HEK293 (cell line): ENCODE measurements at regions of chr17 and their contacts with region 1.

Region 1: GRCh38 chr17:1516388-1517161 is at the start of gene INPP5K:
- H3K4me3 ChIP-seq: peak within 1 kb of the TSS; percentile 96
- H3K27ac ChIP-seq: peak within 1 kb of the TSS; percentile 62
- H3K4me1 ChIP-seq: no peaks in the 10 kb centered on the region
- CTCF ChIP-seq: peak; percentile 57

Region 2: GRCh38 chr17:343211-343610 is 1173.4 kb before region 1 on chr17:
- CTCF ChIA-PET with region 1: no interaction called
- POLR2A ChIA-PET with region 1: interaction called, 12 read pairs
- H3K4me3 ChIP-seq: no peak overlapping the region
- H3K27ac ChIP-seq: no peak overlapping the region
- H3K4me1 ChIP-seq: no peaks in the 10 kb centered on the region
- CTCF ChIP-seq: no peak

Region 3: DNA sequence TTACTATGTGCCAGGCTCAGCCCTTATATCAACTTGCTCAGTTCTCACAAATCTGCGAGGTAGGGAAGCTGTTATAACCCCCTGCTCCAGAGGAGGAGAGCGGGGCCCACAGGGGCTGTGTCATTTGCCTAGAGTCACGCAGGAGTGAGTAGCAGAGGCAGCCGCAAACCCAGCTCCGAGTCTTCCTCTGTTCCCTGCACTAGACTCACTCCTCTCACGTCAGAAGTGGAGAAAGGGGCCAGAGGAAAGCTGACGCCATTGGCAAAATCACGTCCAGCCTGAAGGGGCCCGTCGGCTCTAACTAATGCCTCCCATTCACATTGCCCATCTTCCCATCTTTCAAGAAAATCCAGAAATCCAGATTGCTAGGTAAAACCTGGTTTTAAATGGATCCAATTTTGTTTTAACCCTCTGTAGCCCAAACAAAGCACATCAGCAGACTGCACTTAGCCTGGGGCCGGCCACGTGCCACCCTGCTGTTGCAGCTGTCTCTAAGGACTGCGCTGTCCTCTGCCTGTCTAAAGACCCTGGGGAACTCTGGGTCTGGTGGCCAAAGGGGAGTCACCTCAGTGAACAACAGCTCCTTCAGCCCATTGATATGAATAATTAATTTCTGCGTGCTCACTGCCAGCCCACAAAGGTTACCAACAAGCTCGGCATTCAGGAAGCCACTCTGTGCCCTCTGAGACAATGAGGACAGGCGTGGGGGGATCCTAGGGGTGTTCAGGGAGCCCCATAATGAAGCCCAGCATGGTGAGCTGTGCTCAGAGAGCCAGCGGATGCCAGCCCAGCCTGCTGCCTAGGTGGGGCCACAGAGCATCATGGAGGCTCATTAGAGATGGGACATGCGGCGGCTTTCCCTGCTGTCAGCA is 300.1 kb before region 1 on chr17:
- CTCF ChIA-PET with region 1: no interaction called
- POLR2A ChIA-PET with region 1: no interaction called
- H3K4me3 ChIP-seq: no peak overlapping the region
- H3K27ac ChIP-seq: no peak overlapping the region
- H3K4me1 ChIP-seq: 0 out of 2 replicates have a peak, but pooled peaks cover 3% of the 10 kb centered on the region
- CTCF ChIP-seq: no peak

Region 4: DNA sequence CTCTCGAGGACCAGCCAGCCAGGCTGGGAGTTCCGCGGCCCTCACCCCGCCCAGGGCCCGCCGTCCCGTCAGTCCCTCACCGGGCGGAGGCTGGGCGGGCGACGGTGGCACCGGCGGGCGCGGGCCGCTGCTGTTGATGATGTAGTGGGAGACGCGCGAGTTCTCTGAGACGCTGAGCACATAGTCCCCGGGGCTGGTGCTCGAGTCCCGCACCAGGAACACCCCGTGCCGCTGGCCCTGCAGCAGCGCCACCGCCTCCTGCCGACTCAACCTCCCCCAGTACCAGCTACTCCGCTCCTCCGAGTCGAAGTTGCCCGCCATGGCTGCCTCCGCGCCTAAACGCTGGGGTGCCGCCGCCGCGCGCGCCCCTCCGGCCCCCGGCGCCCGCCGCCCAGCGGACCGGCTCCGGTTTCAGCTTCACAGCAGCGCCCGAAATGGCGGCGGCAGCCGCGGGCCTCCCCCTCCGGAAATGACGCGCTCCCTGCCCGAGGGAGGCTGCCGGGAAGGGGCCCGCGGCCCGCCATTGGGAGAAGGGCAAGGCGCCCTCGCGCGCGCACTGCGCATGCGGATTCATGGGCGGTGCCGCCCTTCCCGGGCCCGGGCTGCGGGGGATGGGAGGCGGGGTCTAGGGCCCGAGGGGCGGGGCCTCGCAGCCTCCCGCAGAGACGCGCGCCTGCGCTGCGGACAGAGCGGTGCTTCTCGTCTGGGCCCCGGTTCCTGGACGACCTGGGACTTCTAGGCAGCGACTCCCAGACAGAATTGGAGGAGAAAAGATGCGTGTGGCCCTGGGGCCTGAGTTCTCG is 60.6 kb before region 1 on chr17 and contains the start of gene CRK:
- CTCF ChIA-PET with region 1: interaction called, 3 read pairs
- POLR2A ChIA-PET with region 1: interaction called, 14 read pairs
- H3K4me3 ChIP-seq: peak within 1 kb of the TSS; percentile 98
- H3K27ac ChIP-seq: peak within 1 kb of the TSS; percentile 92
- H3K4me1 ChIP-seq: peaks cover 7% of the 10 kb centered on the region
- CTCF ChIP-seq: no peak

Region 5: DNA sequence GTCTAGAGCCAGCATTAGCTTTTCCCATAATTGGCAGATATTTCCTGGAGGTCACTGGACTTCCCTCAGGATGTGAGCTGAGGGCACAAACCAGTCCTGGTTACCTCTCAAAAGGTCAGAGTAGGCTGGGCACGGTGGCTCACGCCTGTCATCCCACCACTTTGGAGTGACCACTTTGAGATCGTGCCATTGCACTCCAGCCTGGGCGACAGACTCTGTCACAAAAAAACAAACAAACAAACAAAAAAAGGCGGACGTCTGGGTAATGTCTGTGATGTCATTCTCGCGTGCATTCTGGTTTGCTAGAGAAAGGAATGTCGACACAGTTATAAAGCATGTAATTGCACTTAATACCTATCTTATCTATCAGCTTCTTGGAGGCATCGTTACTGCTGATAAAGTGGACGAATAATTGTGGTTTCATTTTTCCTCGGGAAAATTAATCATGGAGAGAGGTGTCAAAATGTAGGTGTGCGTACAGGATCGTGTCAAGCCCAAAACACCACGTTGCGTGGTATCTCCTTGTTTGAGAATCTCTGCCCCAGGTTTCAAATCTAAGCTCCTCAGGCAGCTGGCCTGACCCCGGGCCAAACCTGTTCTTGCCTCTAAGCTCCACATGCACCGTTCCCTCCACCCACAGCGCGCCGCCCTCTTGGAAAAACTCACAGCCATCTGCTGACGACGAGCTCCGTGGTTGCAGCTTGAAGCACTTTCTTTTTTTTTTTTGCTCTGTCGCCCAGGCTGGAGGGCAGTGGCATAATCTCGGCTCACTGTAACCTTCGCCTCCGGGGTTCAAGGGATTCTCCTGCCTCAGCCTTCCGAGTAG is 54.1 kb before region 1 on chr17:
- CTCF ChIA-PET with region 1: interaction called, 3 read pairs
- POLR2A ChIA-PET with region 1: interaction called, 10 read pairs
- H3K4me3 ChIP-seq: no peak overlapping the region; the same call in 1 of the 2 replicates
- H3K27ac ChIP-seq: peak overlapping the region; percentile 62
- H3K4me1 ChIP-seq: peaks cover 4% of the 10 kb centered on the region
- CTCF ChIP-seq: peak; percentile 41

Region 6: GRCh38 chr17:1488030-1488863 is 28.3 kb before region 1 on chr17:
- CTCF ChIA-PET with region 1: interaction called, 6 read pairs
- POLR2A ChIA-PET with region 1: interaction called, 13 read pairs
- H3K4me3 ChIP-seq: peak overlapping the region; percentile 45
- H3K27ac ChIP-seq: peak overlapping the region; percentile 70; the same call in 1 of the 2 replicates
- H3K4me1 ChIP-seq: peaks cover 6% of the 10 kb centered on the region; the same call in 1 of the 2 replicates
- CTCF ChIP-seq: peak; percentile 37; the same call in 1 of the 2 replicates

Region 7: DNA sequence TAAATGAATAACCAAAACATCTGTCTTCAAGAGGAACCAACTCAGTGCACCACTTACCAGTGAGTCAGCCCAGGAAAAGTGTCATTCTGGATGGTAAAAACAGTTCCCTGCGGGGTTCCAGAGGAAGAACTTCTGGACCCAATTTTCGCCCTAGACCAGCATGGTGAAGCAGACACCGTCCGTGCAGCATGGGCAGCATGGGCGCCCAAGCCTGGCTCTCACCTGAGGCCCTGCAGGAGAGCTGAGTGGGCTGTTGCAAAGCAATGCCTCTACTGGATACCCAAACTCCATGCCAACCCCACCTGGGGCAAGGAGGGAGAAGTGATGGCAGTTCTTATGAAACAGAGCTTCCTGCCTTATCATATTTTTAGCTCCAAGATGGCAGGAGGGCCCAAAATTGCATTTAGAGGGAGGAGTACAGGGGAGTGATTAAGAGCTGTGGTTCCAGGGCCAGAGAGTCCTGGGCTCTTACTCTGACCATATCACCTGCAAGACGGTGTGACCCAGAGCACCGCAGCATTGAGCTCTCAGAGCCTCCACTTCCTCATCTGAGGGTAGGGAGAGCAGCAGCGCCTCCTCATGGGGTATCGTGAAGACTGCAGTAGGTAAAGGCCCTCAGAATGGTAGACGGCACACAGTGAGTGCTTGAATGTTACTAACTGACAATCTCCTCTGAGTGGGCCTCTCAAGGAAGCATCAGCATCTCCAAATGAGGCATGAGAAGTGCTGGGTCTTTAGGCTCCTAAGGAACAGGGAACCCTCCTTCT is 16.4 kb after region 1 on chr17:
- CTCF ChIA-PET with region 1: interaction called, 13 read pairs
- POLR2A ChIA-PET with region 1: interaction called, 17 read pairs
- H3K4me3 ChIP-seq: no peak overlapping the region
- H3K27ac ChIP-seq: no peak overlapping the region
- H3K4me1 ChIP-seq: no peaks in the 10 kb centered on the region
- CTCF ChIP-seq: no peak

Region 8: DNA sequence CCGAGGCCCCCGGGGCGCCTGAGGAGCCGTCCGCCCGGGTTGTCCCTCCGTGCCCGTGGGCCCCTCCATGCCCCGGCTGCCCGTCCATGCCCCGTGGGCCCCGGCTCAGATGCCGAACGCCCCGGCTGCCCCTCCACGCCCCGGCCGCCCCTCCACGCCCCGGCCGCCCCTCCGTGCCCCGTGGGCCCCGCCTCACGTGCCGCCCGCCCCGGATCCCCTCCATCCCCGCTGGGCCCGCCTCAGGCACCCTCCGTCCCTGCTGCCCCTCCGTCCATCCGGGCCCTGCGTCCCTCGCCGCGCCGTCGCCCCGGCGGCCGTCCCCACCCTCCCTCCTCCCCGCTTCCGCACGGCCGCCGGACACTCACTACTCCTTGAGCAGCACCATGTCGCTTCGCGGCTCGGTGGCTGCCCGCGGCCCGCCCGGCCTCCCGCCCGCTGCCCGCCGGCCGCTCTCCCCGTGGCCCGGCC is 45.6 kb after region 1 on chr17:
- CTCF ChIA-PET with region 1: interaction called, 4 read pairs
- POLR2A ChIA-PET with region 1: interaction called, 10 read pairs
- H3K4me3 ChIP-seq: peak overlapping the region; percentile 86
- H3K27ac ChIP-seq: peak overlapping the region; percentile 87
- H3K4me1 ChIP-seq: peaks cover 6% of the 10 kb centered on the region
- CTCF ChIP-seq: no peak